Activated CD4-positive, alpha-beta memory T cell treated with anti-CD3 and anti-CD28 coated beads for 36 hours (primary cell): ENCODE measurements at regions of chr11 and their contacts with region 1.

Region 1: DNA sequence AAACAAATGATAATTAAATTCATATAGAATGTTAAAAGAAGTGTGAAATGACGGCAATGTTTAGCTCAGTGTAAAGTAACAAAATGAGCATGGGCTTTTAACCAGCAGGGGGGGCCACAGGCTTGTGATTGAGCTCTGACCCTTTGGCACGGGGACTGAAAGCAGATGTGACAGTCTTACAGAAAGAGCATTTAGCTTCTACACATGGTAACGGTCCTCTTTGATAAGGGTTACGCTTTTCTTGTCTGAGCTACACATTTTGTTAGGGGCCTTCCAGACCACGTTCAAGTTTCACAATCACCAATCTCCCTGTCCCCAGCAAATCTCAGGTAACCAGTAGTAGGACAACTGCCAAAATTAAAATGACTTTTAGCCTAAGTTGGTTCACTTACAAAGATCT is 262.5 kb downstream of the DCDC1 start:
- DNase-seq: peak; percentile 66
- H3K4me3 Mint-ChIP-seq: no peak overlapping the region
- H3K27ac Mint-ChIP-seq: no peak overlapping the region
- H3K4me1 Mint-ChIP-seq: no peaks in the 10 kb centered on the region
- H3K27me3 Mint-ChIP-seq: no peaks in the 10 kb centered on the region

Region 2: GRCh38 chr11:30936491-30936890 is 170.6 kb before region 1 on chr11:
- CTCF ChIA-PET with region 1: no interaction called
- POLR2A ChIA-PET with region 1: no interaction called
- intact Hi-C with region 1: no loop called
- DNase-seq: no peak
- H3K4me3 Mint-ChIP-seq: no peak overlapping the region
- H3K27ac Mint-ChIP-seq: no peak overlapping the region
- H3K4me1 Mint-ChIP-seq: no peaks in the 10 kb centered on the region
- H3K27me3 Mint-ChIP-seq: no peaks in the 10 kb centered on the region

Region 3: GRCh38 chr11:31089117-31089516 is 17.9 kb before region 1 on chr11:
- CTCF ChIA-PET with region 1: no interaction called
- POLR2A ChIA-PET with region 1: no interaction called
- intact Hi-C with region 1: no loop called
- DNase-seq: no peak
- H3K4me3 Mint-ChIP-seq: no peak overlapping the region
- H3K27ac Mint-ChIP-seq: no peak overlapping the region
- H3K4me1 Mint-ChIP-seq: no peaks in the 10 kb centered on the region
- H3K27me3 Mint-ChIP-seq: no peaks in the 10 kb centered on the region

Region 4: DNA sequence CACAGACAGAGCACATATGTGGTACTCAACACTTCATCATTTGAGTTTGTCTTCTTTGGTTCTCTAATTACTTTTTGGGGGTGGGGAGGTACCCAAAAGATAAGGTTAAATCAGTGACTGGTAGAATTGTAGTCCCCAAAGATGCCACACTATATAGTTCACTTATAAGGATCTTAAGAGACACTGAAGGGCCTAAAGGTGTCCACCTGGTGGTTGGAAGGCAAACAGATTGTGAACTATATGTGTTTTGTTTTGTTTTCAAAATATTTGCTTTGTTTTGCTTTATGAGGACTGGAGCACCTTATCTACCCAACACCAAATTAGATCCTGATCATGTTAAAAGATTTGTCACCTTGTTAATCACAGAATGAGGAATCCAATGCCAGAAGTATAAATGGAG is 126.4 kb after region 1 on chr11:
- CTCF ChIA-PET with region 1: interaction called, 6 read pairs
- POLR2A ChIA-PET with region 1: no interaction called
- intact Hi-C with region 1: loop called (anchors 2 kb)
- DNase-seq: no peak
- H3K4me3 Mint-ChIP-seq: no peak overlapping the region
- H3K27ac Mint-ChIP-seq: no peak overlapping the region
- H3K4me1 Mint-ChIP-seq: no peaks in the 10 kb centered on the region
- H3K27me3 Mint-ChIP-seq: no peaks in the 10 kb centered on the region

Region 5: GRCh38 chr11:32056438-32056837 is 949.4 kb after region 1 on chr11:
- CTCF ChIA-PET with region 1: no interaction called
- POLR2A ChIA-PET with region 1: no interaction called
- intact Hi-C with region 1: no loop called
- DNase-seq: no peak
- H3K4me3 Mint-ChIP-seq: no peak overlapping the region
- H3K27ac Mint-ChIP-seq: no peak overlapping the region
- H3K4me1 Mint-ChIP-seq: no peaks in the 10 kb centered on the region
- H3K27me3 Mint-ChIP-seq: peaks cover 32% of the 10 kb centered on the region

Region 6: DNA sequence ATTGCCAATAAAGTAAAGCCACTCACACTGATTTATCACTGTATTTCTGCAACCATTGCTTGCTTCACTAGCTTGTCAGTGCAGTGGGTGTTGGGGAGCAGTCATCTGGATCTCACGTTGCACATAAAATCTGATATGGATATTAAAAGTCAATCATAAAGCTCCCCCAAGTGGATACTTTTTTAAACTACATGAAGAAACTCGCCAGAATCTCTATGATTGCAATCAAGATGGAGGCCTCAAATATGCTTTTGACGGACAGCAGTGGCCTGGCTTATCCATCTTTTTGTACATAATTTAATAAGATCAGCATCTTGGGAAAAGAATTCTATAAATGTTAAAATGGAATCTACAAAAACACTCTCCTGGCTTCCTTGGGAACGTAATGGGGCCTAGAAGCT is 1190.5 kb after region 1 on chr11:
- CTCF ChIA-PET with region 1: interaction called, 5 read pairs
- POLR2A ChIA-PET with region 1: no interaction called
- intact Hi-C with region 1: loop called (anchors 2 kb)
- DNase-seq: no peak
- H3K4me3 Mint-ChIP-seq: no peak overlapping the region
- H3K27ac Mint-ChIP-seq: no peak overlapping the region
- H3K4me1 Mint-ChIP-seq: no peaks in the 10 kb centered on the region
- H3K27me3 Mint-ChIP-seq: no peaks in the 10 kb centered on the region